Panc1 (cell line): ENCODE measurements at regions of chr16 and their contacts with region 1.

Region 1: GRCh38 chr16:26930786-26931581 is 135.7 kb upstream of the C16orf82 start:
- DNase-seq: no peak
- ATAC-seq: no peak
- H3K4me3 ChIP-seq: no peak overlapping the region
- H3K27ac ChIP-seq: no peak overlapping the region
- H3K4me1 ChIP-seq: no peaks in the 10 kb centered on the region
- H3K27me3 ChIP-seq: peaks cover 3% of the 10 kb centered on the region
- CTCF ChIP-seq: no peak

Region 2: DNA sequence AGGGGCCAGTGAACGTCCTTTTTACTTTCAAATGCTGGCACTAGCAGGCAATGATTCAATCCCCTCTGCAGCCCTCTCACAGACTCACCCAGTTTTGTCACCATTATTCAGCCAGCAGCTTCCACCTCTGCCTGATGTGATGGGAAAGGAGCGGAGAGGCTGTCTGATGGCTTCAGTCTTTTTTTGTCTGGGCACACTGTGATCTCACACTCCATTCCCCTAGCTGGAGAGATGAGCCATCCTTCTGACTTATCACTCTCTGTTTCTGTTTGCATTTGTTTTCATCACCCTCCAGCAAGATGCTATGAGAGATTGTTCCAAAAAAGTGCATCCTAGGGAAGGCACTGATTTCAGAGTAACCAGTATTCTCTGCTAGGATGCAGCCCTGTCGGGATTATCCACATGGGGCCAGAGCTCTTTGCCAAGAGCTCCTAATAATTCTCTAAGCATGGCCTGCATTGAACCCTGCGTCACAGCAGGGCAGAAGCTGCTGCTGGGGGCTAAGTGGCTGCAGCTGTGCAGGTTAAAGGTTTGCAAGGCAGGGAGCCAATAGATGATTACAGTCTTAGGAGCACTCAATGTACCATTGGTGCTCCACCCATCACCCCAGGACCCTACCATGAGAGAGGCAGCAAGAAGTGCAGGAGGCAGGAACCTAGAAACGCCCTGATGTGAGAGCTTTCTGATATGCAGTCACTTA is 100.4 kb before region 1 on chr16:
- CTCF ChIA-PET with region 1: no interaction called
- POLR2A ChIA-PET with region 1: no interaction called
- in situ Hi-C with region 1: no loop called
- intact Hi-C with region 1: no loop called
- DNase-seq: no peak
- ATAC-seq: no peak
- H3K4me3 ChIP-seq: no peak overlapping the region
- H3K27ac ChIP-seq: no peak overlapping the region
- H3K4me1 ChIP-seq: no peaks in the 10 kb centered on the region
- H3K27me3 ChIP-seq: peaks cover 5% of the 10 kb centered on the region
- CTCF ChIP-seq: no peak

Region 3: DNA sequence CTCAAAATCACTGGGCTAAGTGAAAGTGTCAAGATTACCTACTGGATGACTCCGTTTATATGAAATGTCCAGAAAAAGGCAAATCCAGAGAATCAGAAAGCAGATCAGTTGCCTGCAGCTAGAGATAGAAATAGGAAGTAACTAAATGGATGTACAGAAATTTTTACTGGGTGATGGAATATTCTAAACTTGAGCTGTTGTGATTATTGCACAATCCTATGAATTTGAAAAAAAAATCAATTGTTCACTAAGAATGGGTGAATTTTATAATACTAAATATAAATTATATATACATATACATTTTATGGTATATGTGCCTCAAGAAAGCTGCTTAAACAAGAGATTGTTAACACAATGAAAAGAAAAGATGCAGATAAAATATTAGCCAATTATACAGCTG is 45.3 kb before region 1 on chr16:
- CTCF ChIA-PET with region 1: no interaction called
- POLR2A ChIA-PET with region 1: no interaction called
- in situ Hi-C with region 1: no loop called
- intact Hi-C with region 1: no loop called
- DNase-seq: no peak
- ATAC-seq: no peak
- H3K4me3 ChIP-seq: no peak overlapping the region
- H3K27ac ChIP-seq: no peak overlapping the region
- H3K4me1 ChIP-seq: no peaks in the 10 kb centered on the region
- H3K27me3 ChIP-seq: no peaks in the 10 kb centered on the region
- CTCF ChIP-seq: no peak

Region 4: DNA sequence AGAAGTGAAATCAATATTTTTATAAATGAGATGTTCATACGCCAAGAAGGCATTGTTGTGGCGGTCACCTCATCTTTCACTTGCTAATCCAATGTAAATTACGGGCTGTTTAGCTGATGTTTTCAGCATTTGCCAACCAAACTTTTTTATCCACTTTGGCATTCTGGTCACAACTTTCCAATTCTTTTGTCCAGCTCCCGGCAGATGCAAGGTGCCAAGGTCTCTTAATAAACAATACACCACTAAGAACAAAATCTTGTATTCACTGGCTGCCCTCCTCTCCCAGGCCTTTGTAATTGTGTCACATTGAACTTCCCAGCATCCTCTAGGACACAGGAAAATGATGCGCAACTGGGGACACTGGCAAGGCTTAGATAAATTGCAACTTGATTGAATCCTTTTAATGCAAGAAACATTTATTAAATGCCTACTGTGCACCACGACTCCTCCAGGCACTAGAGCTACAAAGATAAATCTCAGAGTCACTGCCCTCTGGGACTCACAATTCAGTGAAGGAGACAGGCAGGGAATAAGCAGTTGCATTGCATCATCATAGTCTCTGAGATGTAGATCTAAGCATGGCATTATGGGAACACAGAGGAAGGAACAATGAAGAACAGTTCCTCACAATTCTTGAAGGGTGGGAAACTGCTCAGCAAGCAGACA is 29.7 kb before region 1 on chr16:
- CTCF ChIA-PET with region 1: no interaction called
- POLR2A ChIA-PET with region 1: no interaction called
- in situ Hi-C with region 1: no loop called
- intact Hi-C with region 1: no loop called
- DNase-seq: no peak
- ATAC-seq: no peak
- H3K4me3 ChIP-seq: no peak overlapping the region
- H3K27ac ChIP-seq: no peak overlapping the region
- H3K4me1 ChIP-seq: no peaks in the 10 kb centered on the region
- H3K27me3 ChIP-seq: no peaks in the 10 kb centered on the region; the same call in 1 of the 2 replicates
- CTCF ChIP-seq: no peak

Region 5: DNA sequence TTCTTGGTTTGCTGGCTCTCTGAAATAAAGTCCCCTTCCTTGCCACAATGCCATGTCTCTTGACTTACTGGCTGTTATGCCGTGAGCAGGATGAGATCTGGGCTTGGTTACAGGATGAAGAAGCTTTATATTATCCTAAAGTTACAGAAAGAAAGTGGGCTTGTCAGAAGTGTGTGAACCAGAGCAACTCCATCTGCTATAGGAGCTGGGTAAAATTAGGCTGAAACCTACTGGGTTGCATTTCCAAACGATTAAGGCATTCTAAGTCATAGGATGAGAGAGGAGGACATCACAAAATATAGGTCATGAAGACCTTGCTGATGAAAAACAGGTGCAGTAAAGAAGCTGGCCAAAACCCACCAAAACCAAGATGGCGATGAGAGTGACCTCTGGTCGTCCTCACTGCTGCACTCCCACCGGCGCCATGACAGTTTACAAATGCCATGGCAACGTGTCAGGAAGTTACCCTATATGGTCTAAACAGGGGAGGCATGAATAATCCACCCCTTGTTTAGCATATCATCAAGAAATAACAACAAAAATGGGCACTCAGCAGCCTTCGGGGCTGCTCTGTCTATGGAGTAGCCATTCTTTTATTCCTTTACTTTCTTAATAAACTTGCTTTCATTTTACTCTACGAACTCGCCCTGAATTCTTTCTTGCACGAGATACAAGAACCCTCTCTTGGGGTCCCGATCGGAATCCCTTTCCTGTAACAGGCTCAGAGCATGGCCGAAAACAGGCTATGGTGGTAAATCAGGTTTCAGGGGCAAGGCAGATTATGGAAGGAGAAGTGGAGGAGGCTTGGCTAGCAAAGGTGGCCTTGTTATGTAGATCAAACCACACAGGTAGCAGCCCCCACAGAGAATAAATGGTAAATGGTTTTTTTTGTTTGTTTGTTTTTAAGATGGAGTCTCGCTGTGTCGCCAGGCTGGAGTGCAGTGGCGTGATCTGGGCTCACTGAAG is 54.4 kb after region 1 on chr16:
- CTCF ChIA-PET with region 1: no interaction called
- POLR2A ChIA-PET with region 1: no interaction called
- in situ Hi-C with region 1: no loop called
- intact Hi-C with region 1: loop called (anchors 2 kb)
- DNase-seq: no peak
- ATAC-seq: no peak
- H3K4me3 ChIP-seq: no peak overlapping the region
- H3K27ac ChIP-seq: no peak overlapping the region
- H3K4me1 ChIP-seq: no peaks in the 10 kb centered on the region
- H3K27me3 ChIP-seq: no peaks in the 10 kb centered on the region
- CTCF ChIP-seq: no peak